Ovary (tissue), 10 donors: ENCODE measurements at regions of chr4 and their contacts with region 1.

Region 1: DNA sequence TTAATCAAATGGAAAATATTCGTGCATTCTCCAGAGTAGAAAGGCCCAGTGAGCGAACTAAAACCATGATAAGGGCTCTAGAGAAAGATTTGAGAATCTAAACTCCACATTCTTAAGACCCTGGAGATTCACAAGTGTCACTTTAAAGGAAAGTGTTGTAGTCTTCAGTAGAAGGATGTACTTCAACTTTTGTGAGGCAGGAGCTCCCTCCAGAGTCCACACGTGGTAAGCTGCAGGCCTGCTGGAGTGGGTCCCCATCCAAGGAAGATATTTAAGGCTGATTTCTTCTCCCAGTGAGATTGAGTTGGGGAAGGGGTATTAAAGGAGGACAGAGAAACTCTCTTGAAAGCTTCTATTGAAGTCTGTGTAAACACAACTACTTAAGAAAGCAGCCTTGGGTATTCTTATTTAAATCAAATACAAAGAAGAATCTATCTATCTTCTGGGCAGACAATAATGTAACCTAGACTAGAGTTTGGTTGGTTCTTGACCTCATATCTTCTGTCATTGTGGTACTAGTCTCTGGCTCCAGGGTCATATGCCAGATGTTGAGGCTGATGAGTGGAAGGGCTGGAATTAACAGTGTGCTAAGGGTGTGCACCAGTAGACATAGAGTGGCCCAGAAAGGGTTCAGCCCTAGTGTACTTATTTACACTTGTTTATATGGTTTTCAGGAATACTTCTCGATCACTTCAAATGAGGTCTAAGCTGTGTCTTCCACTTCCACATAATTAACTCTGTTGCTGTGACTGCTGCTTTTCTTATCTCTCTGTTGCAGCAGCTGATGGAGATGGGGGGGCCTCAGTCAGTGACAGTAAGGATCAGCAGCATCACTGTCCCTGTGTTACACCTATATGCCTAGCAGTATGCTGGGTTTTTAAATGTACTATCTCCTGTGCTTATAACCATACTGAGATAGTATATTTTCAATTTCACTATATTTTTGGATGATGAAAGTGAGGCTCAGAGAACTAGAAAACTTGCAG is 76.1 kb downstream of the HMGB2 start:
- DNase-seq: peak; percentile 52 to 72 (median 71)
- H3K4me3 ChIP-seq: no peak overlapping the region
- H3K27ac ChIP-seq: no peak overlapping the region
- H3K4me1 ChIP-seq: no peaks in the 10 kb centered on the region
- H3K27me3 ChIP-seq: no peaks in the 10 kb centered on the region
- CTCF ChIP-seq: peak; percentile 19 to 57 (median 44)
- EP300 ChIP-seq: no peak
- POLR2A ChIP-seq: no peak

Region 2: DNA sequence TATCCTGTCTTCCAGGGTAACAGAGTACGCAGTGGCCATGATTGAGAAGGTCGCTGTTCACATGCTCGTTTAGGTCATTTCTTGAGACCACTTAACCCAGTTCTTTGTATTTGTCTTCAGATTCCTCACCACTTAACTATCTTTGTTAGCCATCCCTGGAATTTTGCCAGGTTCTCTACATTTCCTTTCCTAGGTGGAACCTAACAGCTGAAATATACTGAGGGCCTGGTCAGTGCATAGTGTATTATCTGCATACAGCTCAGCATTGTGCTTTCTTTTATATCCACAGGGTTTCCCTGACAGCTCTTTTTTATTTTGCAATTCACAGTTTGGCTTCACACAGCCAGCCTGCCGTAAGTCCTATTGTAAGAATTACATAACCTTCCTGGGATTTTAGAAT is 238.3 kb before region 1 on chr4:
- intact Hi-C with region 1: loop called in 3 of 4 experiments (anchors 5 to 10 kb)
- DNase-seq: no peak
- H3K4me3 ChIP-seq: no peak overlapping the region
- H3K27ac ChIP-seq: no peak overlapping the region
- H3K4me1 ChIP-seq: no peaks in the 10 kb centered on the region
- H3K27me3 ChIP-seq: no peaks in the 10 kb centered on the region
- CTCF ChIP-seq: no peak
- EP300 ChIP-seq: no peak
- POLR2A ChIP-seq: no peak

Region 3: GRCh38 chr4:173280998-173281397 is 23.0 kb after region 1 on chr4:
- intact Hi-C with region 1: no loop called
- DNase-seq: no peak
- H3K4me3 ChIP-seq: no peak overlapping the region
- H3K27ac ChIP-seq: no peak overlapping the region
- H3K4me1 ChIP-seq: no peaks in the 10 kb centered on the region
- H3K27me3 ChIP-seq: no peaks in the 10 kb centered on the region
- CTCF ChIP-seq: no peak
- EP300 ChIP-seq: no peak
- POLR2A ChIP-seq: no peak